ENCODE measurements at regions of chr2 and their contacts with region 1.

Region 1: GRCh38 chr2:24304098-24304497 is 56.2 kb downstream of the ITSN2 start:
- DNase-seq: peak; percentile 58 to 74
- ATAC-seq: peak; percentile 97 to 100 (median 98)
- H3K4me3 ChIP-seq: no peak overlapping the region
- H3K27ac ChIP-seq: peak overlapping the region in 7 of 10 donors; percentile 41 to 63 (median 58)
- H3K4me1 ChIP-seq: peaks cover 0 to 25% (median 9%) of the 10 kb centered on the region in 9 donors
- H3K27me3 ChIP-seq: no peaks in the 10 kb centered on the region
- CTCF ChIP-seq: no peak

Region 2: DNA sequence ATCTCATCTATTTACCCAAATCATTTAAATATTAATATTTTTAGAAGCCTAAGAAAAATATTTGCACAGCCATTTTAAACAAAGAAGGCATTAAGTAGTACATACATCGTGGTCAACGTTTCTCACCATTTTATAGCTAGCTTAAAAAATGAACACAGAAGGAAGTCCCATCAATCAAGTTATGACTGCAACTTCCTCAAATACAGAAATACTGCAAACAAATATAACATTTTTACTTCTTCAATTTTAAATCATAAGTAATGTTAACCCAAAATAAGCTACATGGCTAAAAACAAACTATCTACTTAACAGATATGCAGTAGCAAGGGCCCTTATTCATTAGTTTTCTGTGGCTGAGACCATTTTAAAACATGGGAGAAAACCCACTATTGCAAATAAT is 25.6 kb after region 1 on chr2:
- intact Hi-C with region 1: loop called in 1 of 10 experiments (anchors 2 kb)
- DNase-seq: no peak
- ATAC-seq: no peak
- H3K4me3 ChIP-seq: no peak overlapping the region
- H3K27ac ChIP-seq: peak overlapping the region in 1 of 10 donors; percentile 33
- H3K4me1 ChIP-seq: peaks cover 3 to 69% (median 39%) of the 10 kb centered on the region in 9 donors
- H3K27me3 ChIP-seq: no peaks in the 10 kb centered on the region
- CTCF ChIP-seq: no peak

Region 3: DNA sequence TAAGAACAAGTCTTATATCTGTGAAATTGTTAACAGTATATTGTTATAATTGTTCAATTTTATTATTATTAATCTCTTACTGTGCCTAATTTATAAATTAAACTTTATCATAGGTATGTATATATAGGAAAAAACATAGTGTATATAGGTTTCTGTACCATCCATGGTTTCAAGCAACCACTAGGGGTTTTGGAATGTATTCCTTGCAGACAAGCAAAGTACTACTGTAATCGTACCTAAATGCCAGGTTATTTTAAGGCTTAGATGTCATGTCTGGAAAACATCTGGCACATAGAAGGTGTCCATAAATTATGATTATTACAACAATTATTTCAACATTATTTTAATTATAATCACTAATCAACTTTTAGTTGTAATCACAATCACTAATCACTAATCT is 47.9 kb after region 1 on chr2:
- intact Hi-C with region 1: loop called in 2 of 10 experiments (anchors 2 to 10 kb)
- DNase-seq: no peak
- ATAC-seq: peak in 3 of 8 donors; percentile 56 to 72 (median 69)
- H3K4me3 ChIP-seq: no peak overlapping the region
- H3K27ac ChIP-seq: peak overlapping the region in 6 of 10 donors; percentile 5 to 70 (median 18)
- H3K4me1 ChIP-seq: peaks cover 4 to 75% (median 62%) of the 10 kb centered on the region in 9 donors
- H3K27me3 ChIP-seq: no peaks in the 10 kb centered on the region
- CTCF ChIP-seq: peak in 4 of 9 donors; percentile 8 to 31 (median 26)

Region 4: DNA sequence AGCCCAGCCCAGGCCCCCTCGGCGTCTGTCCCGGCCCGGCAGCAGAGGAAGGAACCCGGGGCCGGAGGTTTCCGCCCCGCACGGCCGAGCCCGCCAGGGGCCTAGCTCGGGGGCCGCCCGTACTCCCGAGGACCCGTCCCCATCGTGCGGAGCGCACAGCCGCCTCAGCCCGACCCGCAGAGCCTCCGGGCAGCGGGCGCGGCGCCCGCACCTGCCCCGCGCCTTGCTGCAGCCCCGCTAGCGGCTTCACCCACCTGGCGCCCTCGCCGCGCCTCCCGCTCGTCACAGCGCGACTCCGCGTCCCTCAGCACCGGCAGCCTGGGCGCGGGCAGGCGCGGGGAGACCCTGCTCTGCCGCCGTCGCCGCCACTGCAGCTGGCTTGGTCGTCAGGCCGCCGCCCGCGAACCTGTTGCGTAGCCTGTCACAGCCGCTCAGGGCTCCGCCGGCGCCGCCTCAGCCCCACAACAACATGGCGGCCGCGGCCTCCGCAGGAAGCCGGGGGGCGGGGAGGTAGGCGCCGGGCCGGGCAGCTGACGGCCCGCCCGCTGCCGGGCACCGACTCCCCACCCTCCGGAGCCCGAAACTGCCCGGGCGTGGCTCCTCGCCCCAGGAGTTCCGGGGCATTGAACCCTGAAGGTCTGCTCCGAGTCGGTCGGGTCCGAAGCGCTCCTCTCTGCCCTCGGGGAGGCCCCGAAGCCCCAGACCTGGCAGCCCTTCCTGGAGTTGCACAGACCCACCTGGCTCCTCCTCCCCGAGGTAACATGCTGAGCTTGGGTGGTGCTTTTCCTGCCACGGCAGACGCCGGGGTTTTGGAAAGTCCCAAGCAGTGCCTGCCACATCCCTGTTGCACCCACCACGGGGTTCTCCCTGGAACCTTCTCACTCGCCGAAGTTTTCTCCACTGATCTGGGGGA is 56.2 kb after region 1 on chr2 and contains the start of gene ITSN2:
- intact Hi-C with region 1: loop called in 4 of 10 experiments (anchors 5 to 10 kb)
- DNase-seq: peak; percentile 75 to 85
- ATAC-seq: peak; percentile 86 to 95 (median 90)
- H3K4me3 ChIP-seq: peak within 1 kb of the TSS; percentile 61 to 100 (median 97)
- H3K27ac ChIP-seq: peak within 1 kb of the TSS; percentile 79 to 99 (median 98)
- H3K4me1 ChIP-seq: peaks cover 4 to 53% (median 35%) of the 10 kb centered on the region in 9 donors
- H3K27me3 ChIP-seq: no peaks in the 10 kb centered on the region
- CTCF ChIP-seq: no peak
- total RNA-seq, gene ITSN2: 32.1 to 49.8 (median 38.2) TPM

Region 5: GRCh38 chr2:24375349-24376087 is 71.4 kb after region 1 on chr2:
- intact Hi-C with region 1: loop called in 1 of 10 experiments (anchors 10 kb)
- DNase-seq: no peak
- ATAC-seq: peak in 2 of 8 donors; percentile 33 to 64
- H3K4me3 ChIP-seq: no peak overlapping the region
- H3K27ac ChIP-seq: no peak overlapping the region
- H3K4me1 ChIP-seq: no peaks in the 10 kb centered on the region
- H3K27me3 ChIP-seq: peaks cover 0 to 3% (median 0%) of the 10 kb centered on the region in 7 donors
- CTCF ChIP-seq: no peak

Region 6: GRCh38 chr2:24382363-24383073 is 78.4 kb after region 1 on chr2:
- intact Hi-C with region 1: loop called in 2 of 10 experiments (anchors 1 to 10 kb)
- DNase-seq: peak; percentile 24 to 64
- ATAC-seq: peak; percentile 68 to 92 (median 88)
- H3K4me3 ChIP-seq: no peak overlapping the region
- H3K27ac ChIP-seq: no peak overlapping the region
- H3K4me1 ChIP-seq: peaks cover 0 to 5% (median 0%) of the 10 kb centered on the region in 9 donors
- H3K27me3 ChIP-seq: peaks cover 0 to 3% (median 0%) of the 10 kb centered on the region in 7 donors
- CTCF ChIP-seq: peak; percentile 65 to 88 (median 81)

Measured in heart right ventricle (tissue), 16 donors.